H1 (cell line): ENCODE measurements at regions of chr12 and their contacts with region 1.

Region 1: GRCh38 chr12:29317556-29318363 is 63.2 kb downstream of the ERGIC2 start:
- DNase-seq: peak in 1 of 2 experiments; percentile 7
- H3K4me3 ChIP-seq: no peak overlapping the region
- H3K27ac ChIP-seq: no peak overlapping the region
- H3K4me1 ChIP-seq: 0 out of 7 replicates have a peak, but pooled peaks cover 0 to 3% (median 0%) of the 10 kb centered on the region in 4 experiments
- H3K27me3 ChIP-seq: no peaks in the 10 kb centered on the region
- CTCF ChIP-seq: peak; percentile 40 to 99 (median 98)
- EP300 ChIP-seq: no peak
- POLR2A ChIP-seq: no peak
- RAD21 ChIP-seq: peak; percentile 96 to 97

Region 2: DNA sequence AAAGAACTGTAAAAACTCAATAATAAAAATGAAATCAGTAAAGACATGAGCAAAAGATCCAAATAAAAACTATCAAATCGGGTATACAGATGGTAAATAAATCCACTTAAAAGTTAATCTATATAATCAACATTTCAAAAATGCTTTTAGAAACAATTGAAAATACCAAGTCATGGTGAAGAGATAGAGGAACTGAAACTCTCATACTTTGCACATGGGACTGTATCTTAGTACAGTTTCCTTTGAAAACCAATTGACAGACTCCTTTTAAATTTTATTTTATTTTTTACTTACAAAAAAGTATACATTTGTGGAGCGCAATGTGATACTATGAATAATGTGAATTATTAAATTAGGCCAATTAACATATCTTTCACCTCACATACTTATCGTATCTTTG is 267.3 kb before region 1 on chr12:
- CTCF ChIA-PET with region 1: no interaction called
- POLR2A ChIA-PET with region 1: no interaction called
- DNase-seq: no peak
- H3K4me3 ChIP-seq: no peak overlapping the region
- H3K27ac ChIP-seq: no peak overlapping the region
- H3K4me1 ChIP-seq: no peaks in the 10 kb centered on the region
- H3K27me3 ChIP-seq: no peaks in the 10 kb centered on the region
- CTCF ChIP-seq: no peak
- EP300 ChIP-seq: no peak
- POLR2A ChIP-seq: no peak
- RAD21 ChIP-seq: no peak

Region 3: GRCh38 chr12:29088611-29089219 is 229.0 kb before region 1 on chr12:
- CTCF ChIA-PET with region 1: interaction called, 12 read pairs
- POLR2A ChIA-PET with region 1: no interaction called
- DNase-seq: no peak
- H3K4me3 ChIP-seq: no peak overlapping the region
- H3K27ac ChIP-seq: no peak overlapping the region
- H3K4me1 ChIP-seq: 0 out of 7 replicates have a peak, but pooled peaks cover 0 to 3% (median 0%) of the 10 kb centered on the region in 4 experiments
- H3K27me3 ChIP-seq: no peaks in the 10 kb centered on the region
- CTCF ChIP-seq: peak in 2 of 3 experiments; percentile 16 to 33; a peak in 2 of 4 replicates
- EP300 ChIP-seq: no peak
- POLR2A ChIP-seq: no peak
- RAD21 ChIP-seq: peak; percentile 38 to 52

Region 4: DNA sequence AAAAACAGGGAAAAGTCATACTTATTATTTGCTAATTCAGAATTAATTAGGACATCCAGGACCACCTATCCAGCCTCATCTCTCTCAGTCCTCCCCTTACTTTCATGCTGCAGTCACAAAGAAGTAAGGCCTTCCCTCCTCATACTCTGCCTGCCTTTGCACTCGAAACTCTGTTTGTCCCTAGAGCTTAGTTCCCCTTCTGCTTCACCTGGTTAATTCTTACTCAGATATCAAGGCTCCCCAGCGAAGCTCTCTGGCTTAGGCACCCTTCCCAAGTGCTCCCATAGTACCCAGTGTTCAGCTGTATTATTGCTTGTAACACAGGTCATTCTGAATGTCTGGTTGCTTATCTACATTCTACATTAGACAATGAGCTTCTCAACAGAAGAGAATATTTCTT is 18.1 kb before region 1 on chr12:
- CTCF ChIA-PET with region 1: interaction called, 55 read pairs
- POLR2A ChIA-PET with region 1: no interaction called
- DNase-seq: no peak
- H3K4me3 ChIP-seq: no peak overlapping the region
- H3K27ac ChIP-seq: no peak overlapping the region
- H3K4me1 ChIP-seq: no peaks in the 10 kb centered on the region
- H3K27me3 ChIP-seq: no peaks in the 10 kb centered on the region
- CTCF ChIP-seq: no peak
- EP300 ChIP-seq: no peak
- POLR2A ChIP-seq: no peak
- RAD21 ChIP-seq: no peak